Activated CD4-positive, alpha-beta T cell treated with anti-CD3 and anti-CD28 coated beads for 36 hours (primary cell): ENCODE measurements at regions of chr3 and their contacts with region 1.

Region 1: GRCh38 chr3:27392950-27393679 is 23.9 kb upstream of the NEK10 start:
- DNase-seq: no peak
- ATAC-seq: no peak
- H3K4me3 Mint-ChIP-seq: no peak overlapping the region
- H3K27ac Mint-ChIP-seq: no peak overlapping the region
- H3K4me1 Mint-ChIP-seq: peaks cover 9% of the 10 kb centered on the region
- H3K27me3 Mint-ChIP-seq: no peaks in the 10 kb centered on the region

Region 2: GRCh38 chr3:27380433-27381357 is 12.4 kb before region 1 on chr3:
- CTCF ChIA-PET with region 1: interaction called, 3 read pairs
- POLR2A ChIA-PET with region 1: no interaction called
- intact Hi-C with region 1: loop called in 1 of 2 experiments (anchors 1 kb)
- DNase-seq: no peak
- ATAC-seq: no peak
- H3K4me3 Mint-ChIP-seq: no peak overlapping the region
- H3K27ac Mint-ChIP-seq: no peak overlapping the region
- H3K4me1 Mint-ChIP-seq: peaks cover 6% of the 10 kb centered on the region
- H3K27me3 Mint-ChIP-seq: no peaks in the 10 kb centered on the region